GM18951 (cell line): ENCODE measurements at regions of chr2 and their contacts with region 1.

Region 1: GRCh38 chr2:231394211-231395141 is 1.0 kb upstream of the B3GNT7 start:
- POLR2A ChIP-seq: peak; percentile 71

Region 2: DNA sequence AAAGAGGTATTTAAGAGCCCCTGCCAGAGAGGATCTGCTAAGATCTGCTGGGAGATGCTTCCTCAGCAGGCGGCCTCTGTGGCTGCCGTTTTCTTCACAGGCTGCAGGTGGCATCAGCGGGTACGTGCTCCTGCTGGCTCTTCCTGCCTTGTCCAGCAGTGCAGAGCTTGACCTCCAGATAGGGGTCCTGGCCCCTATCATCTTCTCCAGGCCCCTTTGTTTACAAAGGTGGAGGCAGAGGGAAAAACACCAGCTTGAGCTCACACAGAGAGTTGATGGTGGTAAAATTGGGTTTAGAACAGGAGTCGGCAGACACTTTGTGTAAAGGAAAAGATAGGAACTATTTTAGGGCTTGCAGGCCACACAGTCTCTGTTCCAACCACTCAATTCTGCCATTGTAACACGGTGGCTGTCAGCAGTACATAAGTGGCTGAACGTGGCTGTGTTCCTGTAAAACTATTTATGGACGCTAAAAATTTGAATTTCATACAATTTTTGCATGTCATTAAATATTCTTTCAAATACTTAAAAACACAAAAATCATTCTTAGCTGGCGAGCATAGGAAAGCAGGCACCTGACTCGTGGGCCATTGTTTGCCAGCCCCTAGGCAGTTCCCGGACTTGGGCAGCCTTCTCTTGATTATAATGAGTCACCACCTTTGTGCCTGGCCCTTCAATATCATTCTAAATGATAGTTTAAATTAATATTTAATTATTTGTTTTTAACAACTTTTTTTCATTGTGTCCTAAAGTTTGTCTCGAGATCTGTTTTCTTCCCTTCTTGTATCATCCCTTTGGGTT is 97.2 kb before region 1 on chr2:
- in situ Hi-C with region 1: loop called (anchors 10 kb)
- POLR2A ChIP-seq: no peak